ENCODE measurements at regions of chr2 and their contacts with region 1.

Region 1: DNA sequence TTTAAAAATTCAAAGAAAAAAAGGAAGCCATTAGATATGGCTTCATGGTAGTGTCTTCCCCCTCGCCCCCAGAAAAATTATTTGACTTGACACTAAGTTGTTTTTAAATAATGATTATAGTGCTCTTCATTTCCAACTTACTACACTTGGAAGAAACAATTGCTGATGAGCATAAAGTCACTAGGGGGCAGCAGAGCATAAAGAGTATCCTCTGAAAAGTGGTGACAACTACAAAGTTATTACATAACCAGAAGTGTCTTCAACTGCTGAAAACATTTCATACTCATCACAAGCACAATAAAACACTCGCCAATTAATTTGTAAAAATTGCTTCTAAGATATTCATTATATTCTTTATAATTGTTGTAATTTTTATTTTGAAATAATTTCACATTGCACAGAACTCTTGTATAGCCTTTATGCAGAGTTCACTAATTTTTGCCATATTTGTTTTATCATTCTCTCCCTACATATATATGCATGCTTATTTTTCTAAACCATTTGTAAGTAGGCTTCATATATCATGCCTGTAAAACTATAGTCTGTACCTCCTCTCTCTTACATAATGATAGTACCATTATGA is 54.9 kb downstream of the EXOC6B start:
- DNase-seq: peak in 2 of 5 donors; percentile 64 to 66
- ATAC-seq: peak in 3 of 4 donors; percentile 54 to 70 (median 66)
- H3K4me3 ChIP-seq: no peak overlapping the region
- H3K27ac ChIP-seq: no peak overlapping the region
- H3K4me1 ChIP-seq: peaks cover 0 to 10% (median 0%) of the 10 kb centered on the region in 12 donors
- H3K27me3 ChIP-seq: no peaks in the 10 kb centered on the region
- CTCF ChIP-seq: peak; percentile 77 to 94 (median 91)
- POLR2A ChIP-seq: no peak

Region 2: DNA sequence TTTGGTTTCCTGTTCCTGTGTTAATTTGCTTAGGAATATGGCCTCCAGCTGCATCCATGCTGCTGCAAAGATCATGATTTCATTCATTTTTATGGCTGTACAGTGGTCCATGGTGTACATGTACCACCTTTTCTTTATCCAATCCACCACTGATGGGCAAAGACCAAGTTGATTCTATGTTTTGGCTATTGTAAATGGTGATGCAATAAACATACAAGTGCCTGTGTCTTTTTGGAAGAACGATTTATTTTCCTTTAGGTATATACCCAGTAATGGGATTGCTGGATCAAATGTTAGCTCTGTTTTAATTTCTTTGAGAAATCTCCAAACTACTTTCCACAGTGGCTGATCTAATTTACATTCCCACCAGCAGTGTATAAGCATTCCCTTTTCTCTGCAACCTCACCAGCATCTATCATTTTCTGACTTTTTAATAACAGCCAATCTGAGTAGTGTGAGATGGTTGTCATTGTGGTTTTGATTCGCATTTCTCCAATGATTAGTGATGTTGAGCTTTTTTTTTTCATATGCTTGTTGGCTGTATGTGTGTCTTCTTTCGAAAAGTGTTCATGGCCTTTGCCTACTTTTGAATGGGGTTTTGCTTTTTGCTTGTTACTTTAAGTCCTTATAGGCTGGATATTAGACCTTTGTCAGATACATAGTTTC is 35.4 kb after region 1 on chr2:
- intact Hi-C with region 1: loop called in 1 of 10 experiments (anchors 5 kb)
- DNase-seq: no peak
- ATAC-seq: no peak
- H3K4me3 ChIP-seq: no peak overlapping the region
- H3K27ac ChIP-seq: no peak overlapping the region
- H3K4me1 ChIP-seq: peaks cover 0 to 14% (median 2%) of the 10 kb centered on the region in 12 donors
- H3K27me3 ChIP-seq: no peaks in the 10 kb centered on the region
- CTCF ChIP-seq: no peak
- POLR2A ChIP-seq: no peak

Region 3: GRCh38 chr2:72862239-72862988 is 91.4 kb after region 1 on chr2:
- intact Hi-C with region 1: loop called (anchors 1 to 2 kb)
- DNase-seq: peak; percentile 81 to 94 (median 88)
- ATAC-seq: peak; percentile 93 to 99 (median 98)
- H3K4me3 ChIP-seq: peak overlapping the region in 9 of 12 donors; percentile 16 to 40 (median 32)
- H3K27ac ChIP-seq: no peak overlapping the region
- H3K4me1 ChIP-seq: peaks cover 0 to 12% (median 7%) of the 10 kb centered on the region in 12 donors
- H3K27me3 ChIP-seq: peaks cover 0 to 22% (median 0%) of the 10 kb centered on the region in 9 donors
- CTCF ChIP-seq: peak in 11 of 12 donors; percentile 94 to 100 (median 99)
- POLR2A ChIP-seq: no peak